CD8-positive, alpha-beta T cell (primary cell): ENCODE measurements at regions of chr12 and their contacts with region 1.

Region 1: DNA sequence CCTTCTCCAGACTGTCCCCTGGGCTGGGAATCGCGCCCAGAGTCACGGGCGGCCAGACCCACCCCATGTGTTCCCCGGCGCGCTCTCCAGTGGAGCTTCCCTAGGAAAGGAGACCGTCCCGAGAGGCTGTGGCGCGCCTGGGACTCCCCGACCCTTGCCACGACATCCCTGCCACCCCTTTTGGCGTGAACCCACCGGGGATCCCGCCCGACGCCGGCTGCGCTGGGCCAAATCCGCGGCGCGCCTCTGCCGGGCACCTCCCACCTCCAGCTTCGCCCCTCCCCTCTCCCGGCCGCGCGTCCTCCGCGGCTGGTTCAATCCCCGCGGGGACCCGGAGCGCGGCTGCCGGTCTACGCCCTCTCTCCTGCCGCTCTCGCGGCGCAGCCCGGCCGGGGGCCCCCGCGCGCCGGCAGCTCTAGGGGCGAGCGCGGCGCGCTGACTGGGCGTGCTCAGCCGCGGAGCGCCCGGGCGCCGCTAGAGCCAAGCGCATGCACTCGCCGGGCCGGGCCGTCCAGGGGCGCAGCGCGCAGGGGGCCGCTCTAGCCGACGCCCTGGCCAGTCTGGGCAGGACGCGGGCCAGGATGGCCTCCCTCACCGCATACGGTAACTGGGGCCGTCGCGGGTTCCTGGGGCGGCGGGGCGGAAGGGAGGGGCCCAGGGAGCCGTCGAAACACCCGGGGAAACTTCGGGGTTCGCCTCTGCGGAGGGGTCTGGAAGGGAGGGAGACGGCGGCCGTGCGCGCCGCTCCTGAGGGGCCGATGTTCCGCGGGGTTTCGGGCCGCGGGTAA is 77.4 kb upstream of the ANO4 start:
- DNase-seq: no peak
- ATAC-seq: no peak
- H3K4me3 ChIP-seq: no peak overlapping the region
- H3K4me3 Mint-ChIP-seq: no peak overlapping the region
- H3K27ac ChIP-seq: no peak overlapping the region
- H3K27ac Mint-ChIP-seq: no peak overlapping the region
- H3K4me1 ChIP-seq: no peaks in the 10 kb centered on the region
- H3K4me1 Mint-ChIP-seq: no peaks in the 10 kb centered on the region
- H3K27me3 ChIP-seq: no peaks in the 10 kb centered on the region
- H3K27me3 Mint-ChIP-seq: peaks cover 38% of the 10 kb centered on the region
- CTCF ChIP-seq: no peak

Region 2: GRCh38 chr12:99644629-99645028 is 1072.5 kb before region 1 on chr12:
- CTCF ChIA-PET with region 1: no interaction called
- POLR2A ChIA-PET with region 1: no interaction called
- intact Hi-C with region 1: loop called in 1 of 2 experiments (anchors 5 kb)
- DNase-seq: no peak
- ATAC-seq: no peak
- H3K4me3 ChIP-seq: no peak overlapping the region
- H3K4me3 Mint-ChIP-seq: no peak overlapping the region
- H3K27ac ChIP-seq: no peak overlapping the region
- H3K27ac Mint-ChIP-seq: no peak overlapping the region
- H3K4me1 ChIP-seq: no peaks in the 10 kb centered on the region
- H3K4me1 Mint-ChIP-seq: no peaks in the 10 kb centered on the region
- H3K27me3 ChIP-seq: no peaks in the 10 kb centered on the region
- H3K27me3 Mint-ChIP-seq: no peaks in the 10 kb centered on the region
- CTCF ChIP-seq: no peak